AG04449 (cell line): ENCODE measurements at regions of chr12 and their contacts with region 1.

Region 1: DNA sequence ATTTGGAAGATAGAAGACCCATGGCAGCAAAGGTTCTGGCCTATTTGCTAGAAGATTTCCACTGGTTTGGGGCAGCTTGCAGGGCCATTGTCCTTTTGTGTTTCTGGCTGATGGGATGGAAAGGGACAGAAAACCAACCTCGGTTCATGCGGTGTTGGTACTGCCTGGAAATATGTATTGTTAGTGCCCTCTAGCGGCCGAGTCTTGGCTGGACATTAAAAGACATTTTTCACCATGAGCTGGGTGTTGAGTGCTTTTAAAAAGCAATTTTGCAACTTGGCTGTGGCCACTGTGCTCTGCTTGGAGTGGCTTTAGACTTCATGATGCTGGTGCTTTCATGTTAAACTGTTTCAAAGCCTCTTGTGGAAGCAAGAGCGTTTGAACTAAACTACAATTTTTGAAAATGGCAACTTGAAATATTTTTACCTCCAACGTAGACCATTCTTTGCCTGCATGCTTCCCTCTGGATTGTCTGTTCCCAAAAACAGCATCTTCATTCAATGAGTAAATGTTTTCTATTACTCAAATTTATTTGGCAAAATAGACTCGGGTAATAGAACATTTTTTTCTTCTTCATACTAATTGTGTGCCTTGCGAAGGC is 102.7 kb upstream of the TBX5 start:
- DNase-seq: peak; percentile 16
- H3K4me3 ChIP-seq: no peak overlapping the region
- CTCF ChIP-seq: peak; percentile 66

Region 2: GRCh38 chr12:113965951-113966797 is 542.5 kb before region 1 on chr12 and contains the start of gene RBM19:
- CTCF ChIA-PET with region 1: interaction called, 27 read pairs
- POLR2A ChIA-PET with region 1: no interaction called
- DNase-seq: peak; percentile 81
- H3K4me3 ChIP-seq: peak within 1 kb of the TSS; percentile 83
- CTCF ChIP-seq: peak; percentile 94

Region 3: DNA sequence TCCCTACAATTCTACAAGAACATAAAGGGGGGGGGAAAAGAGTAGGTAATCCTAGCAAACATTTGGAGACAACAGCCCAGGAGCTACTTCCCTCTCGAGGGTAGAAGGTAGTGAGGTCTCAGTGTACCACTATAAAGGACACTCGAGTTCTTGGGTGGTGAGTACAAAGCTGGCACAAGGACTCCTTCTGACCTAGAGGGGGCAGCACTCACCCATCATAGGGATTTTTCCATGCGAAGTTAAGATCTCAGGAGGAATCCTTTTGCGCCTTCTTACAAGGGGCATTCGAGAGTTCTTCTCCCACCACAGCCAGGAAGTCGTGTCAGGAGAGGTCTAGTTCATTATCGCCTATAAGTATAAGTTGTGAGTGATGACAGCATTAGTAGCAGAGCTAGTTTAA is 342.3 kb before region 1 on chr12:
- CTCF ChIA-PET with region 1: interaction called, 53 read pairs
- POLR2A ChIA-PET with region 1: no interaction called
- DNase-seq: no peak
- H3K4me3 ChIP-seq: no peak overlapping the region
- CTCF ChIP-seq: peak; percentile 22

Region 4: DNA sequence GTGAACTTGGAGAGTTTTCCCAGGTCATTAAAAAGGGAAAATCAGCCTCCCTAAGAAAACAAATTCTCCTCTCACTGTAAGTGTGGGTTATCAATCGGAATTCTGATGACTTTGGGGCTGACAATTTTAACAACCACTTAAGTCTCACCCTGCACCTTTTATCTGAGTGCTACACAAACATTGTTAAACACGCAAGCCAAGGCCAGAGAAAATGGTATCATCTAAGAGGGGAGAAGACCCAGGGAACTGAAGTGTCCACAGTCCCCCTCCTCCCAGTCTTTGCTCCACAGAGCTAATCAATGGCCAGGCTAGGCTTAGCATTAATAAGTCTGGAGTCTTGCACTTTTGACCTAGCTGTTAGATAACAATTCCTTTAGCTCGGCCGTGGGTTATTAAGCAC is 51.0 kb before region 1 on chr12:
- CTCF ChIA-PET with region 1: no interaction called
- POLR2A ChIA-PET with region 1: no interaction called
- DNase-seq: no peak
- H3K4me3 ChIP-seq: no peak overlapping the region
- CTCF ChIP-seq: no peak

Region 5: GRCh38 chr12:114476159-114476558 is 32.5 kb before region 1 on chr12:
- CTCF ChIA-PET with region 1: interaction called, 10 read pairs
- POLR2A ChIA-PET with region 1: no interaction called
- DNase-seq: no peak
- H3K4me3 ChIP-seq: no peak overlapping the region
- CTCF ChIP-seq: no peak

Region 6: DNA sequence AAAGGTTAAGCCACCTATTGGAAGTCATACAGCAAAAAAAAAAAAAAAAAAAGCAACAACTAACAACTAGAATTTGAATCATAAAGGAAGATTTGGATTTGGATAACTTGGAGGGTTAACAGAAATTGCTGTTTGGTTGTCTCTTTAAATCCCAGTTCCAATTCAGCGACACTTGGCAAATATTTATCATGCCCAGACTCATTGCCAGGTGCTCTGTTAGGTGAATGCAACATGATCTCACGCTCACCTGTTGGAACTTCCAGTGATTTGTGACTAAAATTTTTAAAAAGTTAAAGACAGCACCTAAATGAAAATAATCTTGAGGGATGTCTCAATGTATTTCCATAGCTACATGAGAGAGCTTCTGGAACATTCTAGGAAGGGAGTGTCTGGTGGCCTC is 71.7 kb after region 1 on chr12:
- CTCF ChIA-PET with region 1: no interaction called
- POLR2A ChIA-PET with region 1: no interaction called
- DNase-seq: no peak
- H3K4me3 ChIP-seq: no peak overlapping the region
- CTCF ChIP-seq: no peak

Region 7: GRCh38 chr12:114704096-114704495 is 195.5 kb after region 1 on chr12:
- CTCF ChIA-PET with region 1: no interaction called
- POLR2A ChIA-PET with region 1: no interaction called
- DNase-seq: no peak
- H3K4me3 ChIP-seq: no peak overlapping the region
- CTCF ChIP-seq: no peak